Activated CD4-positive, alpha-beta memory T cell treated with anti-CD3 and anti-CD28 coated beads for 36 hours (primary cell): ENCODE measurements at regions of chr9 and their contacts with region 1.

Region 1: DNA sequence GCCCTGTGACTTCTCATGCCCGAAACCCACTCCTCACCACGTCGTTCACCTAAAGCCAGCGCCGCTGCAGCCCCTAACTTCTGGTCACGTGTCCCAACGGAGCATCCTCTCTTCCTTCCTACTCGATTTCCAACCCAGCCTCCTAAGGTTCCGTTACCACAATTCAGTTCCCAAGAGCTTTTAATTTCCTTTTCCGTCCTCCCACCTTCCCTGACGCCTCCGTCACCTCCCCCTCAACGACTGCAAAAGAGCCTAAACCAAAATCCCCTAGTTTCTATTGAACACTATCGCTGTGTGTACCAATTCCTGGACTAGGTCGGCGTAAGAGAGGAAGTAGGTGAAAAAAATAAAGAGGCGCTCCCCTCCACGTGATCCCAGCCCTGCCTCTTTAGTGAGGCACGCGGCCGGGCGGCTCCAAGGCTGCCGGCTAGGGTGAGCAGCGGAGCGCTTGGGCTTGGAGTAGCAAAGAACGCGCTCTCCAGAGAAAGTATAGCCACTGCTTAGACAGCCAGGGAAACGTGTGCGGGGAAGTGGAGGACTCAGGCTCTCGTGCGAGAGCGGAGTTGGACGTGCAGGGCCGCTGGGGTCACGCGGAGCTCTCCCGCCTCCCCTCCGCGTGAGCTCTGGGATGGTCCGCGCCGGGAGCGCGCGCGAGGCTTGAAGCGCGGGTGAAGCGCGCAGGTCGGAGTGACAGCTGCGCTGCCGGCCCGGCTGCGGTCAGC is at the starts of genes CENPP and NOL8:
- DNase-seq: peak; percentile 90
- H3K4me3 Mint-ChIP-seq: peak within 1 kb of the TSS; percentile 90
- H3K27ac Mint-ChIP-seq: peak within 1 kb of the TSS; percentile 94
- H3K4me1 Mint-ChIP-seq: peaks cover 36% of the 10 kb centered on the region
- H3K27me3 Mint-ChIP-seq: no peaks in the 10 kb centered on the region
- total RNA-seq, gene CENPP: 21.8 to 23.5 TPM
- total RNA-seq, gene NOL8: 45.6 to 47.1 TPM

Region 2: GRCh38 chr9:92115071-92115858 is 210.2 kb before region 1 on chr9 and contains the start of gene SPTLC1:
- CTCF ChIA-PET with region 1: no interaction called
- POLR2A ChIA-PET with region 1: no interaction called
- intact Hi-C with region 1: loop called (anchors 2 kb)
- DNase-seq: peak; percentile 97
- H3K4me3 Mint-ChIP-seq: peak within 1 kb of the TSS; percentile 97
- H3K27ac Mint-ChIP-seq: peak within 1 kb of the TSS; percentile 94
- H3K4me1 Mint-ChIP-seq: peaks cover 22% of the 10 kb centered on the region
- H3K27me3 Mint-ChIP-seq: no peaks in the 10 kb centered on the region
- total RNA-seq, gene SPTLC1: 39.9 to 41.2 TPM

Region 3: DNA sequence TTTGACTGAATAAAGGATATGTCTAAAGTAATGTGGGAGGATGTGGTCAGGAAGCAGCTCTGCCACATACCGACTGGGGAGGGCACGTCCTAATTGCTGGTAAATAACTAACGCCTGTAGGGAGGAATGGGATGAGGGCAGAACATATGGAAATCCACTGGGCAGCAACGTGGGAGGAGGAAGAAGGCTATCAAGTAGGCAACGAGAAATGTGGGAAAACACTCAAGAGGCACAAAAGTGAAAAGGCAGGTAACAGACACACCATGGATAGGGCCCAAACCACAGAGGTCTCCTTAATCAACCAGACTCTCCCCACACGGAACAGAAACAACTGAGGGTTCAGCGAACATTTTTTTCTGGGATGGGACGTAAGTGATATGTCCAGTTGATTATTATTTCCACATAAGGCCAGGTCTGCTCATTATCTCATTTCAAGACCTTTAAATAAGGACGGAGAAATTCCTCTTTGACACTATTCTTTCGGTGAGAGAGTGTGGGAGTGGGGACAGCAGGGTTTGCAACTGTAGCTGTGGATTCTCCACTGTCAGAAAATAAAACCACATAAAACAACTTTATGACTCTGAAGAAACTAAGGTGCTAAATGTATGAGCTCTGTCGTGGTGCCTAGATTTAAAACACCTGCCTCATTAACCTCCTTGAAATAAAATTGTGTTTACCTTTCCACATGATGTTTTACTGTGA is 48.9 kb before region 1 on chr9:
- CTCF ChIA-PET with region 1: no interaction called
- POLR2A ChIA-PET with region 1: interaction called, 5 read pairs
- intact Hi-C with region 1: loop called (anchors 5 kb)
- DNase-seq: no peak
- H3K4me3 Mint-ChIP-seq: no peak overlapping the region
- H3K27ac Mint-ChIP-seq: peak overlapping the region; percentile 71
- H3K4me1 Mint-ChIP-seq: peaks cover 30% of the 10 kb centered on the region
- H3K27me3 Mint-ChIP-seq: no peaks in the 10 kb centered on the region

Region 4: GRCh38 chr9:92293452-92294296 is 31.8 kb before region 1 on chr9 and contains the start of gene IARS1:
- CTCF ChIA-PET with region 1: interaction called, 4 read pairs
- POLR2A ChIA-PET with region 1: interaction called, 7 read pairs
- intact Hi-C with region 1: loop called (anchors 1 kb)
- DNase-seq: peak; percentile 100
- H3K4me3 Mint-ChIP-seq: peak within 1 kb of the TSS; percentile 95
- H3K27ac Mint-ChIP-seq: peak within 1 kb of the TSS; percentile 93
- H3K4me1 Mint-ChIP-seq: peaks cover 65% of the 10 kb centered on the region
- H3K27me3 Mint-ChIP-seq: no peaks in the 10 kb centered on the region
- total RNA-seq, gene IARS1: 212 to 222 TPM

Region 5: GRCh38 chr9:92438900-92439526 is 113.6 kb after region 1 on chr9:
- CTCF ChIA-PET with region 1: interaction called, 3 read pairs
- POLR2A ChIA-PET with region 1: no interaction called
- intact Hi-C with region 1: loop called (anchors 10 kb)
- DNase-seq: no peak
- H3K4me3 Mint-ChIP-seq: no peak overlapping the region
- H3K27ac Mint-ChIP-seq: no peak overlapping the region
- H3K4me1 Mint-ChIP-seq: peaks cover 12% of the 10 kb centered on the region
- H3K27me3 Mint-ChIP-seq: no peaks in the 10 kb centered on the region

Region 6: DNA sequence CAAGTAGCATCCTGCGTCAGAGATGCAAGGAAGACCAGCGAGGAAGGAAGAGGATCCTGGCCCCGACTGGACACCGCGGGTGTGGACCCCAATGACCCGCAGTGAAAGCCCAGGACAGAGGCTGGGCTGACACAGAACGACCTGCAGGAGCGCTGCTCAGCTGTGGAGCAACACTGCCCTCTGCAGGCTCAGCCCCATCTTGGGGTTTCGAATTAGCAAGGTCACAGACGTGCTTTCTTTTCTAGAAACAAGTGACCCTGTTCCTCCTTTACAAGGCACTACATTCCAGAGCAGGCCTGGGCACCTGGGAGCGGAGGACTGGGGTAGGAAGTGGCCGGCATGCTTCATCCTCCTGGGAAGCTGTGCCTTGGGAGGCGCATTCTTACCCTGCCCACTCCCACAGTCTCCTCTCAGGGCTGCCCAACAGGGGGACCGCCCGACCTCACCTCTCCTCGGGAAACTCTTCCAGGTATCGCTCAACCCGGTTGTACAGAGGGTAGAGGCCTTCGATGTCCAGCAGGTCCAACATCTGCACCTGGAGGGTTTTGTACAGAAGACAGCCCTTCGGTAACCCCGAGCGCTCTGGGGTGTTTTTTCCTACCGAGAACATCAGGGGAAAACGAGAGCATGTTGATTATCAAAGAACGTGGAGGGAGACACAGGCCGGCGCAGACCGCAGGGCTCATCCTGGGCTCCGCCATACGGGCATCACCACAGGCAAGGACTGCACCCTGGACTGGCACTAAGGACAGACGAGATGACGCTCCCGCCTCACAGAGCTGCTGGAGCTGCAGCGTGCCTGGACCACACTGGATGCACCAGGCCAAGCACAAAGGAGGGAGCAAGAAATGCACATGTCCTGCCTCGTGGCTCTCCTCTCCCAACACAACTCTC is 309.5 kb after region 1 on chr9:
- CTCF ChIA-PET with region 1: interaction called, 4 read pairs
- POLR2A ChIA-PET with region 1: no interaction called
- intact Hi-C with region 1: loop called (anchors 2 kb)
- DNase-seq: peak; percentile 76
- H3K4me3 Mint-ChIP-seq: no peak overlapping the region
- H3K27ac Mint-ChIP-seq: no peak overlapping the region
- H3K4me1 Mint-ChIP-seq: peaks cover 7% of the 10 kb centered on the region
- H3K27me3 Mint-ChIP-seq: no peaks in the 10 kb centered on the region

Region 7: DNA sequence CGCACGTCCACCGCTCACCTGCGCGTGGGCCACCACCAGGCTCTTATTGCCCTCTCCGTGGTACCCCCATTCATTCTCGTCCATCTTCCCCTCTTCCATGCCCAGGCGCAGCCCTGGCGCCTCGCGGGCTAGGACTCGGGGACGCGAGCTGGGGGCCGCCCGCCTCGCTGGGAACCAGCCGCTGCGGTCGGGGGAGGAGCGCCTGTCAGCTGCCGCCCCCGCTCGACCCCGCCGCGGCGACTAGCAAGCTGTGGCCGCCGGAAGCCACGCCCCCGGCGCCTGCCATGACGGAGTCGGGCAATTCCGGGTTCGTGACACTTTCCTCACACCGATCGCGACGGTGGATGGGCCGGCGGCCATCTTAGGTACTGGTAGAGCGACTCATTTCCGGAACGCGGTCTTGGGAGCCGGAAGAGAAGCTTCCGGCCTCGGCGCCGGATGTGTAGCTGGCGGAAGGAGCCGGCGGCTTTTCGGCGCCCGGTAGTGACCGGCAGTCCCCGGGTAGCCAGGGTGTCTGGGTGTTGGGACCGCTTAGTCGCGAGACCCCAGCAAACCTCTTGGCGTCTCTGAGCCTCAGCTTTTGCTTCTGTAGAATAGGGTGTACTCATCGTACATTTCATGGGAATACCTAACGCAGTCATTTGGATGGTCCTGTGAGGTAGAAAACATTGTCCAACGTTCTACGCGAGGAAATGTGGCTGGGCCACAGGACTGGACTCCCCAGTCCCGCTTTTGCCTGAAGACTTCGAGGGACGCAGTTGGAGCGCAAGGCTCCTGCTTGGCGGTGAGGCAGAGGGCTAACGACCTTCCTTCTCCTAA is 344.7 kb after region 1 on chr9 and contains the start of gene IPPK:
- CTCF ChIA-PET with region 1: no interaction called
- POLR2A ChIA-PET with region 1: interaction called, 11 read pairs
- intact Hi-C with region 1: loop called (anchors 1 kb)
- DNase-seq: peak; percentile 99
- H3K4me3 Mint-ChIP-seq: peak within 1 kb of the TSS; percentile 95
- H3K27ac Mint-ChIP-seq: peak within 1 kb of the TSS; percentile 85
- H3K4me1 Mint-ChIP-seq: peaks cover 35% of the 10 kb centered on the region
- H3K27me3 Mint-ChIP-seq: no peaks in the 10 kb centered on the region
- total RNA-seq, gene IPPK: 10.8 to 11.0 TPM